Activated CD4-positive, alpha-beta T cell treated with anti-CD3 and anti-CD28 coated beads, Interleukin-2, amount 10 ng/mL, durations not matched to agents 24 days and 14 days (primary cell): ENCODE measurements at regions of chrX and their contacts with region 1.

Region 1: GRCh38 chrX:13087322-13088155 is 43.1 kb upstream of the FAM9C start:
- DNase-seq: peak; percentile 90
- H3K4me3 Mint-ChIP-seq: peak overlapping the region; percentile 87
- H3K27ac Mint-ChIP-seq: peak overlapping the region; percentile 100
- H3K4me1 Mint-ChIP-seq: peaks cover 59% of the 10 kb centered on the region
- H3K27me3 Mint-ChIP-seq: no peaks in the 10 kb centered on the region

Region 2: DNA sequence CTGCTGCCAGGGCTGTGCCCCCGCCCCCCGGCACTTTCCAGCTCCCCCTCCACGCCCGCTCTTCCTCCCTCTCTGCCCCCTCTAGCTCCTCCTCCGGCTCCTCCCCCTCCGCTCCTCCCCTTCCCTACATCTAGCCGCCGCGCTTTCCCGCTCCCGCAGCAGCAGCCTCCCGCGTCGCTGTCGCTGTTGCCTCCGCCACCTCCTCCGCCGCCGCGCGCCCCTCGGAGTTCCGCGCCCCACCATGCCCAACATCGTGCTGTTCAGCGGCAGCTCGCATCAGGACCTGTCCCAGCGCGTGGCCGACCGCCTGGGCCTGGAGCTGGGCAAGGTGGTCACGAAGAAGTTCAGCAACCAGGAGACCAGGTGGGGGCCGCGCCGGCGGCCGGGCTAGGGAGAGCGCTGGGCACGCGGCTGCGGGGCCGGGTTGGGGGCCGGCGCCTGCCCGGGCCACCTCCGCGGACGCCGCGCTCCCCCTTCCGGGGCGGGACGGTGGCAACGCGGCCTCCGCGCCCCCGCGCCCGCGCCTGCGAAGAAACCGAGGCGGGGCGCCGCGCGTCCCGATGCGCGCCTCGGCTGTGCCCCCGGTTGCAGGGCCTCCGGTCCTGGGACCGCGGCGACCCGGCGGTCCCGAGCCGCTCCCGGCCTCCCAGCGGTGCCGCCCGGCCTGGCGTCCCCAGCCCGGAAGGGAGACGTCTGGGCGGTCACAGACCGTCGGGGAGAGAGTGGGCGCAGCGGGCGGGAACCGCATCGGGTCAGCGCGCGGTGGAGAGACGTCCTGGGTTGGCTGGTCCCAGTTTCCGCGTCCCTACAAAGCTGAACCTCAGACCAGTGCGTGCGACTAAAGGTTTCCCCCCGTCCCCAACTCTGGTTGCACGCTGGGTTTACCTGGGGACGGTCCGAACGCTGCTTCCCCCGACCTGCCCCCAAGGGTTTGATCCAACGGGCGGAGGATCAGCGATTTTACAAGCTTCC is 296.0 kb before region 1 on chrX and contains the start of gene PRPS2:
- intact Hi-C with region 1: loop called (anchors 10 kb)
- DNase-seq: peak; percentile 92
- H3K4me3 Mint-ChIP-seq: peak within 1 kb of the TSS; percentile 87
- H3K27ac Mint-ChIP-seq: peak within 1 kb of the TSS; percentile 85
- H3K4me1 Mint-ChIP-seq: peaks cover 34% of the 10 kb centered on the region
- H3K27me3 Mint-ChIP-seq: peaks cover 8% of the 10 kb centered on the region
- total RNA-seq, gene PRPS2: 111 and 115 TPM in 2 replicates

Region 3: DNA sequence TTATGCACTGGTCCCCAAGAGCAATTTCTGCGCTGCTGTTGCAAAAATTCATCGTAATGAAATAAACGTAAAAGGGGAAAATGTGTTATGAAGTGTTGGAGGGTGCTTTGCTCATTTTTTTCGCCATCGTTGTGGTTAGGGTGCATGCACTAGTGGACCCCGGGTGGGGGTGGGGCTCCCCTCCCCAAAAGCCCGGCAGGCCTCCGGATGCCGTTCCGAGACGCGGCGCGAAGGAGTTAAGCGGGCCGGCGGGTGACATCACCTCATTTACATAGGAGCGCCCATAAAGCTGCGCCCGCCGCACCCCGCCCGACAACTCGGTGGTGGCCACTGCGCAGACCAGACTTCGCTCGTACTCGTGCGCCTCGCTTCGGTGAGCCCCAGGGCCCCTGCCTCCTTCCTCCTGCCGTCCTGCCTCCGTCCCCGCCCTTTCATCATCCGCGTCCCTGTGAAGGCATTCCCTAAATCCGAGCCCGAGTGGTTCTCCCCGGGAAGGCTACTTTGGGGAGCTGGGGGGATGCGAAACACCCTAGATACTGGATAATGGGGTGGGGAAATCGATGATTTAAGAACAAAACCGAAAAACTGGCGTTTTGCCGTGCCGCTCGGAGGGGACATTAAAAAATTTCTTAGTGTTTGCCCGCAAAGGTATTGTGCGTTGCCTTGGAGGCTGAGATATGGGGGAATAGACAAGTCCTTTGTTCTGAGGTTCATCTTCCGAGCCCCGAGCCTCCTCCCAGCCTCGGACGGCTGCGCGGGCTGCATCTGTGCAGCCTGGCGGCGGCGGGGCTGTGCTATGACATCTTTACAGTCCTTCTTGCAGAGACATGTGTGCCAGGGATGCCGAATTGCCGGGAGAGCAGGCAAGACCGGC is 112.5 kb before region 1 on chrX and contains the start of gene TMSB4X:
- intact Hi-C with region 1: loop called (anchors 1 kb)
- DNase-seq: peak; percentile 96
- H3K4me3 Mint-ChIP-seq: peak within 1 kb of the TSS; percentile 97
- H3K27ac Mint-ChIP-seq: peak within 1 kb of the TSS; percentile 98
- H3K4me1 Mint-ChIP-seq: peaks cover 32% of the 10 kb centered on the region
- H3K27me3 Mint-ChIP-seq: no peaks in the 10 kb centered on the region
- total RNA-seq, gene TMSB4X: 5,263 and 5,311 TPM in 2 replicates

Region 4: DNA sequence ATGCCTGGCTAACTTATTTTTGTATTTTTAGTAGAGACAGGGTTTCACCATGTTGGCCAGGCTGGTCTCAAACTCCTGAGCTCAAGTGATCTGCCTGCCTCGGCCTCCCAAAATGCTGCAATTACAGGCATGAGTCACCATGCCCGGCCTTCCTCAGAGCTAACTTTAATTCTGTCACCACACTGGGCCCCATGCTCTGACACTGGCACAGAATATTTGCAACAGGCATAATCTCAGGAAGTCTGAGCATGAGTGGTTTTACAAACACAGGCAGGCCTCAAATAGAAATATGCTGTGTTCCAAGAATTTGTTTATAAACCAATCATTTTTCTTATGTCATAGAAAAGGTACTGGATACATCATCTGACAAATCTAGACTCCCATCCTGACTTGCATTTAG is 10.4 kb before region 1 on chrX:
- intact Hi-C with region 1: loop called (anchors 1 kb)
- DNase-seq: peak; percentile 71
- H3K4me3 Mint-ChIP-seq: no peak overlapping the region
- H3K27ac Mint-ChIP-seq: peak overlapping the region; percentile 88
- H3K4me1 Mint-ChIP-seq: peaks cover 60% of the 10 kb centered on the region
- H3K27me3 Mint-ChIP-seq: no peaks in the 10 kb centered on the region

Region 5: GRCh38 chrX:13257223-13258051 is 169.9 kb after region 1 on chrX:
- intact Hi-C with region 1: loop called (anchors 5 kb)
- DNase-seq: peak; percentile 60
- H3K4me3 Mint-ChIP-seq: peak overlapping the region; percentile 40
- H3K27ac Mint-ChIP-seq: peak overlapping the region; percentile 53
- H3K4me1 Mint-ChIP-seq: peaks cover 39% of the 10 kb centered on the region
- H3K27me3 Mint-ChIP-seq: no peaks in the 10 kb centered on the region

Region 6: DNA sequence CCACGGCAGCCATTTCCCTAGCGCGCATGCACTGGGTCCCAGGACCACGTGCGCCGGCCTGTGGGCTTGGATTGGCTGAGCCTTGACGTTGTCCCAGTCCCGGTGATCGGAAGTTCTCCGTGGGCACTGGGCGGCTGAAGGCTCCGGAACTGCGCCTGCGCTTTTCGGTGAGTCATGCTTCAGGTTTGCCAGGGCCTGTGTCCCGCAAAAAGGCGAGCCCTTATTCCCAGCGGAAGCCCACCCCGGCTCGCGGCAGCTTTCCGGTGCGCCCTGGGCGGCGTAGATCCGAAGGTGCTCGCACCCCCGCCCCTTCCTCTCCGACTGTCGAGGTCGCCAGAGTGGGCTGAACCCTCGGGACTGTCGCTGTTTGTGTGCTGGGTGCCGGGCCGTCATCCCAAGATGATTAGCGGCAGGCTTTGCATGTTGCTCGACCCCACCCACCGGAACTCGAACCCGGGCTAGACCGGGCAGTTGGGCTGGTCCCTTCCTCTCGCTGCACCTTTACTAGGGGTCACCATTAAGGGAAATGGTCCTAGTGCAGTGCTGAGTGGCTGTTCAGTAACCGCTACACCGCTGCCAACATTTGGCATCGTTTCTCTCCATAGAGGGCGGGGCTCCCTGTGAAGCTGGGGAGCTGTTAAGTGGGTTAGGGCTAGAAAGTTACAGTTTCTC is 565.6 kb after region 1 on chrX and contains the start of gene TCEANC:
- intact Hi-C with region 1: loop called (anchors 2 kb)
- DNase-seq: peak; percentile 97
- H3K4me3 Mint-ChIP-seq: peak within 1 kb of the TSS; percentile 90
- H3K27ac Mint-ChIP-seq: peak within 1 kb of the TSS; percentile 94
- H3K4me1 Mint-ChIP-seq: peaks cover 13% of the 10 kb centered on the region
- H3K27me3 Mint-ChIP-seq: no peaks in the 10 kb centered on the region
- total RNA-seq, gene TCEANC: 3.0 and 4.2 TPM in 2 replicates